ENCODE measurements at regions of chr2 and their contacts with region 1.

Region 1: DNA sequence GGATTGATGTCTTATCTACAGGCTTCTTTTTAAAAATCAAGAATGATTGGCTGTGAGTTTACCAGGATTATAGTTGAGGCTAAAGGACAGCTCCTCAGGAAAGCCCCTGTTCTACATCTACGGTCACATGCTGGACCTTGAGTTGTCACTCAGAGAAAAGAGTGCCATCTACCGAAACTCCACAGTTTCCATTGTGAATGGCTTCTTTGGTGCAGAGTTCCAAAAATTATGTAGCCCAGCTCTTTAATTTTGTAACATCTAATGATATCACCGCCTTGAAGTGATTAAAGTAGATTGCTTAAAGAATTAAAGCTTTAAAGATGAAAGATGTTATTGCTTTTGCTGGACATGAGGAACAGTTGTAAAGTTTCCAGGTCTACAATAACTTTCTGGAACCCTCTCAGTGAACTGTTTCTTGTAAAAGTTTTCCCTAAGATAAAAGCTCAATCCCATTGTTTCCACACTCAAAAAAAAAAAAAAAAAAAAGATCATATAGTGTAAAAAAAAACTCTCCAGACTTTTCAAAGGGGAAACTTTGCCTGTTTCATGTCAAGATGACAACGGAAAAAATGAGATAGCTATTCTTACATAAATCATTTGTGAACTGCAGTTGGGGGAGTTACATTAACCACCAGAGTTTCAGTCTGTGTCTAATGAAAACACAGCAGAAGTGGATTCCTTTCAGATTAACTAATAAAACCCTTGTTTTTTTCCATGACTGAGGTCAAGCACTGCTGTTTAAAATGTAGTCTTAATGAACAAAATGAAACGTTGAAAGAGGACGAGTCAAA is 4.3 kb downstream of the COL3A1 start:
- DNase-seq: peak; percentile 82
- H3K4me3 ChIP-seq: peak overlapping the region; percentile 5
- H3K27ac ChIP-seq: no peak overlapping the region
- H3K4me1 ChIP-seq: peaks cover 36% of the 10 kb centered on the region
- H3K27me3 ChIP-seq: no peaks in the 10 kb centered on the region
- CTCF ChIP-seq: peak; percentile 72

Region 2: DNA sequence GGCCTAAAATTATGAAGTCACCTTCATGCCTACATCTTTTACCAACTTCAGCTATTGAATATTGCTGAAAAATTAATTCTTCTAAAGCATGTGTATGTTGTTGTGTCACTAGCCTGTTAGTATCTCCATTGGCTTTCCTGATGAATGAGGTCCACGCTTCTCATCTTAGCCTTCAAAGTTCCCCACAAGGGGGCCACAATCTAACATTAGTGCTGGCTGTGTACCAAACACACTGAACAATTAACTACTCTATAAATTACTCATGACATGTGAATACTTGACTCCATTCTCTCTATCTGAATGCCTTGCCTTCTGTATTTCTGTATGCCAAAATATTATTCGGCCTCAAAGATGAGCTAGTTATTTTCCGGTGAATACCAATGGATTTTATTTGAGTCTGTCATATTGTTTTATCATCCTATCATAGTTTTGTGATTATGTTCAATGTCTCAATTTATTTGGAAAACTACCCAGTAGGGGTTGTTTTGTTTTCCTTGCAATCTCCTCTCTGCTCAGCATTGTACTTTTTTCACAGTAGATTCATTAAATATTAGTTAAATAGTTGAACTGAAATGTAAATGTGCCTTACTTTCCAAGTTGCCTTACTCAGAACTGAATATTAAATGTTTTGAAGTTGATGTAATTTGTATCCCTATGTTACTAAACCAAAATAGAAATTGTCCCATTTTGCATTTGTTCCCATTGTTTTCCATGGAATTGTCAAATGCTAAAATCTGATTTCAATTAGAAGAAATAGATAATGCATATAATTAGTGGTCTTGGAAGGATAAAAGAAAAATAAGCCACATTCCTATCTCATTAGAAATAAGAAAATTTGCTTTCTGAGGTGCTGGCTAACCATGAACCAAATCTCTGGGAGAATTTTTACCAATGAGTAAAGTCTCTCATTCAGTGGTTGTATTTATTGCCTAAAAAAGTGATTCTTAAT is 212.7 kb before region 1 on chr2:
- CTCF ChIA-PET with region 1: interaction called, 7 read pairs
- POLR2A ChIA-PET with region 1: no interaction called
- intact Hi-C with region 1: loop called (anchors 2 kb)
- DNase-seq: peak; percentile 87
- H3K4me3 ChIP-seq: no peak overlapping the region
- H3K27ac ChIP-seq: no peak overlapping the region
- H3K4me1 ChIP-seq: peaks cover 10% of the 10 kb centered on the region
- H3K27me3 ChIP-seq: no peaks in the 10 kb centered on the region
- CTCF ChIP-seq: peak; percentile 73

Region 3: DNA sequence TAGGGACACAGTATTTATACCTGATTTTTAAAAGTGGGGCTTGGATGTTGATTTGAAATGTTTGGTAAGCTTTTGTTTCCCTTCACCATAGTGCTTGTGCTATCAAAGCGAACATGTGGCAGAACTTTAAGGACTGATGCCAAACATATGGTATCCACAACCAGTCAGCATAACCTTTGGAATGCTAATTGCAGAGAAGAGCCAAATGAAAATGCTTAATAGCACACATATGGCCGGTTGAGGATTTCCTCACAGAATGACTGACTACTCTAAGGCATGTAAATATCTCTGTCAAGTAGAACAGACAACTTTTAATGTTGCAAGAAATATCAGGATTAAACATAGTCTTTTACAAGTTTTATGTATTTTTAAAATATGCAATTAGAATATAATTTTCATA is 125.2 kb before region 1 on chr2:
- CTCF ChIA-PET with region 1: no interaction called
- POLR2A ChIA-PET with region 1: no interaction called
- intact Hi-C with region 1: loop called (anchors 5 kb)
- DNase-seq: peak; percentile 86
- H3K4me3 ChIP-seq: no peak overlapping the region
- H3K27ac ChIP-seq: peak overlapping the region; percentile 77
- H3K4me1 ChIP-seq: peaks cover 33% of the 10 kb centered on the region
- H3K27me3 ChIP-seq: no peaks in the 10 kb centered on the region
- CTCF ChIP-seq: no peak

Region 4: DNA sequence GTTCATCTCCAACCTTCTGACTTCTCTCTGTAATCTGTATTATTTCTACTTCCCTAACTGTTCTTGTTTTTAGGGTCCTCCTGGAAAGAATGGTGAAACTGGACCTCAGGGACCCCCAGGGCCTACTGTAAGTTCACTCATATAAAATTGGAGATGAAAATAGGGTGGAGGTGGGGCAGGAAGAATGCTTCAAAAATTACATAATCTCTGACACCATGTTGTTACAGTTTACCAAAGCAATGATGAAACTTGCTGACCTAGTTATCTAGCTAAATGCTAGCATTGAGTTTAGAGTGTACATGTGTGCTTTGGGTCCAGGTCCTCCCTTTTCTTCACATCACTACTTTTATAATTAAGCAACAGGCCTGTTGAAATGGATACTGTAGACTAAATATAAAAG is 18.8 kb after region 1 on chr2:
- CTCF ChIA-PET with region 1: no interaction called
- POLR2A ChIA-PET with region 1: no interaction called
- intact Hi-C with region 1: no loop called
- DNase-seq: no peak
- H3K4me3 ChIP-seq: no peak overlapping the region
- H3K27ac ChIP-seq: no peak overlapping the region
- H3K4me1 ChIP-seq: peaks cover 15% of the 10 kb centered on the region
- H3K27me3 ChIP-seq: no peaks in the 10 kb centered on the region
- CTCF ChIP-seq: no peak

Measured in A673 (cell line).